Common myeloid progenitor, CD34-positive (primary cell): ENCODE measurements at regions of chr11 and their contacts with region 1.

Region 1: DNA sequence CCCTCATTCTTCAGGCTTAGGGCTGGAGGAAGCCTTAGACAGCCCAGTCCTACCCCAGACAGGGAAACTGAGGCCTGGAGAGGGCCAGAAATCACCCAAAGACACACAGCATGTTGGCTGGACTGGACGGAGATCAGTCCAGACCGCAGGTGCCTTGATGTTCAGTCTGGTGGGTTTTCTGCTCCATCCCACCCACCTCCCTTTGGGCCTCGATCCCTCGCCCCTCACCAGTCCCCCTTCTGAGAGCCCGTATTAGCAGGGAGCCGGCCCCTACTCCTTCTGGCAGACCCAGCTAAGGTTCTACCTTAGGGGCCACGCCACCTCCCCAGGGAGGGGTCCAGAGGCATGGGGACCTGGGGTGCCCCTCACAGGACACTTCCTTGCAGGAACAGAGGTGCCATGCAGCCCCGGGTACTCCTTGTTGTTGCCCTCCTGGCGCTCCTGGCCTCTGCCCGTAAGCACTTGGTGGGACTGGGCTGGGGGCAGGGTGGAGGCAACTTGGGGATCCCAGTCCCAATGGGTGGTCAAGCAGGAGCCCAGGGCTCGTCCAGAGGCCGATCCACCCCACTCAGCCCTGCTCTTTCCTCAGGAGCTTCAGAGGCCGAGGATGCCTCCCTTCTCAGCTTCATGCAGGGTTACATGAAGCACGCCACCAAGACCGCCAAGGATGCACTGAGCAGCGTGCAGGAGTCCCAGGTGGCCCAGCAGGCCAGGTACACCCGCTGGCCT is 641 bp downstream of the APOC3 start:
- DNase-seq: no peak
- H3K4me3 ChIP-seq: no peak overlapping the region
- H3K27ac ChIP-seq: no peak overlapping the region
- H3K4me1 ChIP-seq: peaks cover 0 to 13% (median 9%) of the 10 kb centered on the region in 4 experiments
- H3K27me3 ChIP-seq: no peaks in the 10 kb centered on the region

Region 2: DNA sequence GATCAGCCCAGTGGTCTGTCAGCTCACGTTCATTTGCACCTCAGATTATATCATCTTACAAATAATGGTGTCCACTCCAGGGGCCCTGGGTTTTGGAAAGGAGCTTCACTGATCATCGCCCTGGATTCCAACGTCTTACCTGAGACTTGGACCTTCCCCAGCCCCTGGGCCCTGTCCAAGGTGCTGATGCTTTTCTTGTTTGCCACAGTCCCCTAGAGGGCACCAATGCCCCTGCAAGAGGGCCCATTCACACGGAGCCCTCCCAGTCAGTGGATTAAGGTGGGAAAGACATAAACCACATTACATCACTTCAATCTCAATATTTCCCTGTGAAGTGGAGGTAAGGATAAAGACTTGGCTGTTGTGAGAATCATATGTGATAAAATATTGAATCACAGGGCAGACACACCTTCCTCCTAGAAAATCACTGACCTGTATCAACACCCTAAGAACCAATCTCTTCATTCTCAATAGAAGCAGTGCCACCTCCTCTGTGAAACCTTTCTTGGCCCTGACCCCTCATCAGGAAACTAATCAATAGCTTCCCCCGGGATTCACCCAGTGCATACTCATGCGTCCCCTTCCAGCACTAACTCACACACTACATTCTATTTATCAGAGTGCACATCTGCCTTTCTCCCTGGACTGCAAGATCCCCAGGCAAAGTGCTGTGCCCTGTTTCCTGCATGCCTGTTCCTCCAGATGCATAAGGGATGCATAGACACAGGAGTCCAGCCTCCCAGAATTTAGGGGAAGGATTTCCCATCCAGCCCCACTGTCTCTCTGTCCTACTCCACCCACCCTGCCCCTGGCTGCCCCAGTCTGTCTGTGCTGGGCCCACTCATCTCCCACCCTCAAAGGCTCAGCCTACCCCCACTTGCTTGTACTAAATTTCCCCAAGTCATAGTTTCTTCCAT is 224.5 kb before region 1 on chr11:
- CTCF ChIA-PET with region 1: no interaction called
- POLR2A ChIA-PET with region 1: no interaction called
- DNase-seq: peak; percentile 61 to 84 (median 83)
- H3K4me3 ChIP-seq: no peak overlapping the region
- H3K27ac ChIP-seq: no peak overlapping the region
- H3K4me1 ChIP-seq: peaks cover 0 to 15% (median 11%) of the 10 kb centered on the region in 4 experiments
- H3K27me3 ChIP-seq: no peaks in the 10 kb centered on the region

Region 3: DNA sequence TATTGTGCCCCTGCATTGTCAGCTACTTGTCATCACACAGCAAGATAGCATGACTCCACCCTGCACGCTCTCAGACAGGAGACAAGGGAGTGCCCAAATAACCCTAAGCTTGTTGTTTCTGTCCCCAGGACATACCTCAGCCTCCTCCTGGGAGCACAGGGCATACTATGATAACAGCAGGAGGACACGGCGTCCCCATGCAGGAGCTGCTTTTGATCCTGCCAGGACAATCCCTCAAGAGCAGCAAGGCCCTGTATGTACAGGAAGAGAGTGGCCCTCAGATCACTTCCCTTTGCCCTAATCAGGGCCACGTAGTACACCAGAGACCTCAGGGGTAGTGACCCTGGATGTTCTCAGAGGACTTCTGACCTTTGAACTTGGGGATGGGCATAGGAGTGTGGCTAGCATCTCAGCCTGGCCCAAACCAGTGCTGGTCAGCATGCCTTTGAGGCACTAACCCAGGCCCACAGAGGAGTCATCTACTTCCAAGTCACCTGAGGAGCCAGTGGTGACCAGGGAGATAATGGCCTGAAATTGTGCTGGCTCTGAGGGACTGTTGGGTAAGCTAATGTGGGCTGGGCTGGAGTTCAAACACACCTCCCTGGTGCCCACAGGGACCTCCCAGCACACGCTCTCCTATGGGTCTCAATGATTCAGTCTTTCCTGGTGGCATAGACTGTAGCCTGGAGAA is 16.4 kb before region 1 on chr11:
- CTCF ChIA-PET with region 1: interaction called, 3 read pairs
- POLR2A ChIA-PET with region 1: interaction called, 10 read pairs
- DNase-seq: no peak
- H3K4me3 ChIP-seq: no peak overlapping the region
- H3K27ac ChIP-seq: no peak overlapping the region
- H3K4me1 ChIP-seq: no peaks in the 10 kb centered on the region
- H3K27me3 ChIP-seq: peaks cover 0 to 2% (median 0%) of the 10 kb centered on the region in 5 experiments